Dendritic cell treated with granulocyte-macrophage colony-stimulating factor and Interleukin-4, amounts not matched to agents 40 ng/mL and 50 ng/mL, for 4 days (primary cell): ENCODE measurements at regions of chr3 and their contacts with region 1.

Region 1: GRCh38 chr3:130960139-130960795 is 66.4 kb downstream of the ASTE1 start:
- H3K4me3 Mint-ChIP-seq: no peak overlapping the region
- H3K27ac Mint-ChIP-seq: no peak overlapping the region
- H3K4me1 Mint-ChIP-seq: no peaks in the 10 kb centered on the region
- H3K27me3 Mint-ChIP-seq: no peaks in the 10 kb centered on the region

Region 2: DNA sequence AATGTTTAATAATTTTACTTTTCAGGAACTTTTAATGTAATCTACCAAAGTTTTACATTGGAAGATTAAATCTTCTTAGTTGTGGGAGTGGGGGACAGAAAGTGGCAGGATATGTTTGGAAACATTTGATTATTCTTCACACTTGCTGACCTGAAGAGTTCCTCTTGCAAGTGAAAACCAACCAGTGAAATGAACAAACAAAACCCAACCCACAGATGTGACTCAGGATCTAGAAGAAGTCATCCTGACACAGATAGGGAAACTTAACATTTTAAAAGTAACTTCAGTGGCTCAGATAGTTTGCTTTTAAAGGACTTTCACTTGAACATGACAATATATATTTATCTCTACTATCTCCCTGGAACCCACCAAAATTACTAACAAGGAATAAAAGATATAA is 10.9 kb after region 1 on chr3:
- intact Hi-C with region 1: loop called (anchors 1 kb)
- H3K4me3 Mint-ChIP-seq: no peak overlapping the region
- H3K27ac Mint-ChIP-seq: no peak overlapping the region
- H3K4me1 Mint-ChIP-seq: no peaks in the 10 kb centered on the region
- H3K27me3 Mint-ChIP-seq: no peaks in the 10 kb centered on the region